Activated CD4-positive, alpha-beta T cell treated with anti-CD3 and anti-CD28 coated beads for 36 hours (primary cell): ENCODE measurements at regions of chr3 and their contacts with region 1.

Region 1: GRCh38 chr3:48811524-48811923 is 36.1 kb downstream of the PRKAR2A start:
- DNase-seq: no peak
- ATAC-seq: no peak
- H3K4me3 Mint-ChIP-seq: peak overlapping the region; percentile 18
- H3K27ac Mint-ChIP-seq: peak overlapping the region; percentile 77
- H3K4me1 Mint-ChIP-seq: peaks cover 32% of the 10 kb centered on the region
- H3K27me3 Mint-ChIP-seq: no peaks in the 10 kb centered on the region

Region 2: DNA sequence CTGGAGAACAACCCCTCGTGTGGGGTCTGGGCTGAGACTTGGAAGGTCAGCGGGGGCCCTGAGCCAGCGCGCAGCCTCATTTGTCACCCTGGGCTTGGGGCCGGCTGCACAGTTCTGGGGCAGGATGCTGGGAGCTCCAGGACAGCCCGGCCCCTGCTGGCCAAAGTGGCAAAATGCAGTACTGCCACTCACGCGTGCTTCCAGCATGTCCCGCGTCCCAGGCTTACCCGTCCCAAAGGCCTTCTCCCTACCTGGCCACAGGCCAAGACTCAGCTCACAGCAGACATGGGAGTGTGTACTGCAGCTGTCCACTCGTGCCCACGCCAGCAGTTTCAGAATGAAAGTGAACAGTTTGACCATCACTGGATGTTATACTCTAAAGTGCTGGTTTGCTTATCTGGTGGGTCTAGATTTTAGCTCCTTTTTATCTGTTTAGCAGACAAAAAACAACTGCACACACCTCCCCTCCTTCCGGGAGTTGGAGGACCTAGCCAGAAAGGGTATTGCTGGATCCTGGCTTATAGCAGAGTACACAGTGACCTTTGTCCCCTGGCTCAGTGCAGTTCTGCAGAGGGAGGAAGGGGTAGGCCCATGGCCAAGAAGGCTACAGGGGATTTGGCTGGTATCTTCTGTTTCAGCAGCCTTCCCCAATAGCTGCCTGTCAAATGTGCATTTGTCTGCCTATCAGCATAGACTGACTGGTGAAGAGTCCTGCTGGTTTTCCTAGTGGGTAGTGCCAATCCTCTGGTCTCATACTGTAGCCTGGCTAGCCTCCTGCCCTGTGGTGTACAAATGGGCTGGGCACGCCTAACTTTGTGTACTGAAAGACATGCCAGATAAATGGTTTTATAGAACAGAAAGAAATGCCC is 71.3 kb before region 1 on chr3:
- CTCF ChIA-PET with region 1: interaction called, 3 read pairs
- POLR2A ChIA-PET with region 1: interaction called, 11 read pairs
- intact Hi-C with region 1: no loop called
- DNase-seq: peak; percentile 76
- ATAC-seq: peak; percentile 92
- H3K4me3 Mint-ChIP-seq: no peak overlapping the region
- H3K27ac Mint-ChIP-seq: no peak overlapping the region
- H3K4me1 Mint-ChIP-seq: no peaks in the 10 kb centered on the region
- H3K27me3 Mint-ChIP-seq: no peaks in the 10 kb centered on the region

Region 3: DNA sequence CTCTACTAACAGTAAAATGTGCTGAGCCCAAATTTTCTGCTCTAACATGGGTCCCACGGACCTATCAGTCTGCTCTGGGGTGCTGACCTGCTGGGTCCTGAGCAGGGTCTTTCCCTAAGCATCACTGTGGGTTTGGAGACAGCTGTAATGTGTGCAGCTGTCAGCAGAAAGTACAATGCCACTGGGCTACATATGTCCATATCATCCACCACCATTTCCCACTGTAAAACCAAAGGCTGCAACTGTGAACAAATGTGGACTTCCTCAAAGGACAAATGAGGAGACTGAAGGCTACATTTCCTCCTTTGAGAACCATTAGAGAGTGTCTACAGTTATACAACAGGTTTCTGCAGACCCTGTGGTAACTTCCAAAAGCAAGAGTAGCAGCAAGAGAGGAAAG is 60.7 kb before region 1 on chr3:
- CTCF ChIA-PET with region 1: no interaction called
- POLR2A ChIA-PET with region 1: no interaction called
- intact Hi-C with region 1: no loop called
- DNase-seq: no peak
- ATAC-seq: no peak
- H3K4me3 Mint-ChIP-seq: no peak overlapping the region
- H3K27ac Mint-ChIP-seq: no peak overlapping the region
- H3K4me1 Mint-ChIP-seq: no peaks in the 10 kb centered on the region
- H3K27me3 Mint-ChIP-seq: no peaks in the 10 kb centered on the region

Region 4: DNA sequence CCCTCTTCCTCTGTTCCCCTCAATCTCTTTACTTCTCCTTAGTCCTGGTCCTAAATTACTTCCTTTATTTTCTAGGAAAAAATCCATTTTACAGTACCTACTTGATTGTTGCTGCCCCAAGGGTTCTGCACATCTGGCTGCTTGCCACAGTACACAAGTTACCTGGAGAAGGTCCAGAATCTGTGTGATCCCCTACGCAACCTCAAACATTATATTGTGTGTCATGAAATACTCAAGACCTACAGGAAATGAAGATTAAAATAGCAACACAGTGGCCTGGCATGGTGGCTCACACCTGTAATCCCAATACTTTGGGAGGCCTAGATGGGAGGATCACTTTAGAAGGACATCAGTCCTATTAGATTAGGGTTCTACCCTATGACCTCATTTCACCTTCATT is 12.5 kb before region 1 on chr3:
- CTCF ChIA-PET with region 1: no interaction called
- POLR2A ChIA-PET with region 1: no interaction called
- intact Hi-C with region 1: no loop called
- DNase-seq: no peak
- ATAC-seq: no peak
- H3K4me3 Mint-ChIP-seq: no peak overlapping the region
- H3K27ac Mint-ChIP-seq: no peak overlapping the region
- H3K4me1 Mint-ChIP-seq: no peaks in the 10 kb centered on the region
- H3K27me3 Mint-ChIP-seq: no peaks in the 10 kb centered on the region

Region 5: DNA sequence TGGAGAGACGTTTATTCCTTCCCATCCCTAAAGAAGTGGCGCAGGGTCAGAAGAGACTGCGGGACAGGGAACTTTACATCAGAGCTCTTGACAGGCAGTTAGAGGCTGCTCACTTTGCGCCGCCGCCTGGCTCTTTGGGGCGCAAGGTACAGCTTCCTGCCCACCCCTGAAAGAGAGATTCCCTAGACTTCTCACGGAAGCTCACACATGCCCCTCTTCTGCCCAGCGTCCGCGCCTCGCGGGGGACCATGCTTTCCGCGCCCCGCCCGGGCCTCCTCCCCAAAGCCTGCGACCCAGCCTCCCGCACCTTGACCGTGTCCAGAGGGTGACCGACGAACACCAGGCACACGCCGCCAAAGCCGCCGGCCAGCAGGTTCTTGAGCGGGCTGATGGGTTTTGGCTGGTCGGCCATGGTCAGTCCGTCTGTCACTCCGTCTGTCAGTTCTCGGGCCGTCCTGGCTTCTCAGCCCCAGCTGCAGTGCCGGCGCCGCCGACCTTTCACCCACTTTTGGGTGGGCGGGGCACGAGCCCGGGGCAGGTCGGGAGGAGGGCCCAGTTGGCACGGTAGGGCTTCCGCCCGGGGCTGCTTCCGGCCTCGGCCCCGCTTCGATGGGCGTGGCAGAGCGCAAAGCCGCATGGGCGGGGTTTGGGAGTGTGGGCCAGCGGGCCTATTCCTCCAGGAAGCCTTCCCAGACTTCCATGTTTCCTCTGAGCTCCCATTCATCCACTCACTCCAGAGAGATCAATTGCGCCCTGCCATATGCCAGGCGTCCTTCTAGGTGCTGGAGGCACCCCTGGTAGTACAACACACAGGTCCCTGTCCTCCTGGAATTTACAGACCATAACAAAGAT is 87.1 kb after region 1 on chr3 and contains the start of gene SLC25A20:
- CTCF ChIA-PET with region 1: interaction called, 3 read pairs
- POLR2A ChIA-PET with region 1: no interaction called
- intact Hi-C with region 1: loop called in 1 of 2 experiments (anchors 2 kb)
- DNase-seq: peak; percentile 96
- ATAC-seq: peak; percentile 96
- H3K4me3 Mint-ChIP-seq: peak within 1 kb of the TSS; percentile 90
- H3K27ac Mint-ChIP-seq: peak within 1 kb of the TSS; percentile 92
- H3K4me1 Mint-ChIP-seq: peaks cover 30% of the 10 kb centered on the region
- H3K27me3 Mint-ChIP-seq: no peaks in the 10 kb centered on the region
- total RNA-seq, gene SLC25A20: 15.8 to 18.5 TPM